Cardiac septum (tissue), 1 donor: ENCODE measurements at regions of chr1 and their contacts with region 1.

Region 1: GRCh38 chr1:15046487-15047165 is 106.9 kb upstream of the TMEM51 start:
- DNase-seq: no peak

Region 2: DNA sequence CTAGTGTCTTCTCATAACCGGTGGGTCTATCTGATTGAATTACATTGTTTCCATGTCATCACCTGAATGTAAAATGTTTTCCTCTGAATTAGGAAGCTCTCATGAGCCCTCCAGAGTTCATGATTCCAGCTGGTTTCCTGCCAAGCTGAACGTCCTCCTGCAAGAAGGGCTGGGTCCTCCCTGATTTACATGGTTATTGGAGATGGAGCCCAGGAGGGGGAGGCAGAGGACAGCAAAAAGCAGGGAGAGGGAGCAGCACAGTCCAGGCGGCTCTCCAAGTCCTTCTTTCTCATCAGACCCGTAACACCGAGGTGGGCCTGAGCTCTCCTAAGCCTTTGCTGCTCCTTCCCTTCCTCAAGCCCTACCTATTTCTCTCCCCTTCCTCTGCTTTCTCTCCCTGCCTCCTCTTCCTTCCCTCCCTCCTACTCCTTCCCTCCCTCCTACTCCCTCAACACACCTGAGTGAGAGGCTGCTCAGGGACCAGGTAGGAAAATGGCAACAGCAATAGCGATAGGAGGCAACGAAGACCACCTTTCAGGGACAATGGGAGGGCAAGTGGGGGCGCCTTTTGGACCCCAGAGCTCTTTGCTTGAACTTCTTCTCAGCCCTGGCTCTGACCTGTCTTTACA is 1080.7 kb before region 1 on chr1:
- intact Hi-C with region 1: loop called (anchors 5 kb)
- DNase-seq: no peak

Region 3: GRCh38 chr1:14113841-14114567 is 932.6 kb before region 1 on chr1:
- intact Hi-C with region 1: loop called (anchors 2 kb)
- DNase-seq: no peak

Region 4: DNA sequence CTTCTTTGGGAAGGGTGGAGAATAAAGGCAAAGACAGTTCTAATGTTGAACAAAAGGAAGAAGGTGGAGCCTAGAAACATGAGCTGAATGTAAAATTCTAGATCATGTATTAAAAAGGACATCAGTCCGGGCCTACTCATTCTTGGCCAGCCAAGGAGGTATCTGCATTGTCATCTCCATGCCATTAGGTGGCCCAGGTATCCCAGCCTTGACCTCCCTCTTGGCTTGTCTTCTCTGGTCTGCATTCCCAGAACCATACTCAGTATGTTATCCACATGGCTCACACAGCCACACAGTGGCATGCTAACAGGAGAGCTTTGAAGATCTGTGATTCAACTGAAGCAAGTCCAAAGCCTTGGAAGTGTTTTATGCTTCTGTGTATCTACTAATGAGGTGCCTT is 817.9 kb before region 1 on chr1:
- intact Hi-C with region 1: no loop called
- DNase-seq: no peak

Region 5: GRCh38 chr1:14778898-14779865 is 267.4 kb before region 1 on chr1:
- intact Hi-C with region 1: loop called (anchors 5 kb)
- DNase-seq: no peak

Region 6: DNA sequence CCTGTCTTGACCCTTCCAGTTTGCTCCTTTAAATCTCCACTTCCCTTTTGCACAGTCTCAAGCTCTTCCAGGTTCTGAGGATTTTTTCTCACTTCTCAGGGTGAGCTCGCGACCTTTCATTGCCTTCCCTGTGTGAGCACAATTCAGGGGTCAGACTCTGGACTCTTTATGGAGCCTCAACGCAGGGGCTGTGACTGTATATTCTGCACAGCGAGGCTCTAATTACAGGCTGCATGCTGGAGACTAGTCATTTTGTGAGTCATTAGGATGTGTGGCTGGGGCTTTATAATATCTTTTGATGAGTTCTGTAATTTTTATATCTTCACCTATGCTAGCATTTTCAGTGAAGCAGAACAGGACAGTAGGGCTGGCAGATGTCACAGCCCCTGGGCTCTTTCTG is 177.4 kb before region 1 on chr1:
- intact Hi-C with region 1: no loop called
- DNase-seq: no peak

Region 7: DNA sequence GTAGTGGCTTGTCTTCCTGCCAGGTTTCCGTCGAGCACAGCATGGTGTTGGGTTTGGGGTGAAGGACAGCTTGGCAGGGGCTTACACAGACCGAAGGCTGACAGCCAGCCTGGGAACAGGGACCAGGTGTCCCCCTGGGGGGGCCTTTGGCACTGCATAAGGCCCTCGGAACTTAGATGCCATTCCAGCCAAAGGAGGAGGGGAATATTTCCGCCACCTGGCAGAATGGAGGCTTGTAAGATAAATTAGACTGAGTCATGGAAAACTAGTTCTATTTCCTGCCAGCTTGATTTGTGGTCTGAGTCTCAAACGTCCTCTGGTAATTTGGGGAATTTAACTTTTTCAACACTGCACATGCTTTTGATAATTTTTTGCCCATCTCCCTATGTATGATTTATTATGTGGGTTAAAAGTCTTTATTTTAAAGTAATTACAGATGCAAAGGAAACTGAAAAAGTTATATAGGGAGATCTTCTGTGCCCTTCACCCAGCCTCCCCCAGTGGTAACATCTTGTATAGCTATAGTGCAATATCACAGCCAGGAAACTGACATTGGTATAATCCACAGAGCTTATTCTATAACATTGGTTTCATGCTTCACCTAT is 95.4 kb after region 1 on chr1:
- intact Hi-C with region 1: no loop called
- DNase-seq: no peak